CD4-positive, alpha-beta T cell (primary cell): ENCODE measurements at regions of chr6 and their contacts with region 1.

Region 1: DNA sequence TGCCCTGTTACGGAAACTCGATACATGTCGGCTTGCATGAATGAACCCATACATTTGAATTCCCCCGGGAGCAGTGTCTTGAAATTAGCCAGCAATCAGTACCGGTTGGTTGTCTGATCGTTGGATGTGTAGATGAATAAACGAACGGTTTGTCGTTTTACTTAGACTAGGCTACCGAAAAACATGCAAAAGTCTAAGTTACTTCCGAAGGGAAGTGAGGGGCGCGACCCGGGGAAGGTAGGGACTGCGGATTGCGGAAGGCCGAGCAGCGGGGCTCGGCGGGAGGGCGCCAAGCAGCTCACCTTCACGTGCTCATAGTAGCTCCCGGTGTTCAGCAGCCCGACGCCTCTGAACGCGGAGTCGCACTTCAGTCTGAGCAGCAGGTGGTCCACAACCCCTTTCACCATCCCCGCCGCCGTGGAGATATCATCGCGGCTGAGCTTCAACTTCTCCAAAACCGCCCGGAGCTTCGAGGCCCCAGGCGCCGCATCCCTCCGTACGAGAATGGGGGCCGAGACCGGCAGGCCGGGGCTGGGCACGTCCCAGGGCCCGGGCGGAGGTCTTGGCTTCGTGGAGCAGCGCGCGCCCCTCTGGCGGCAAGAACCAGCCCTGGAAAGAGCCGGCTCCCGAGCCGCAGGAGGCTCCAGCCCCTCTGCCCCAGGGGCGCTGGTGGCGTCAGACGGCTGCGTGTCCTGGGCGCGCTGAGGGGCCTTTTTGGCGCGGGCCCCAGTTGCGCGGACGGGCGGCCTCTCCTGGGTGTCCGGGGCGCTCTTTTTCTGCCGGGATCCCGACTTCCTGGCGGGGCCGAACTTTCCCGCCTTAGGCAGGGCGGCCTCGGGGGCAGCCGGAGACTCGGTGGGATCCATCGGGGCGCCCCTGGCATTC is 632 bp downstream of the CGAS start:
- DNase-seq: peak; percentile 9 to 74 (median 31)
- ATAC-seq: peak; percentile 53
- H3K4me3 ChIP-seq: peak overlapping the region; percentile 87
- H3K4me3 Mint-ChIP-seq: peak overlapping the region; percentile 92
- H3K27ac ChIP-seq: peak overlapping the region; percentile 69 to 85
- H3K27ac Mint-ChIP-seq: peak overlapping the region; percentile 86
- H3K4me1 ChIP-seq: peaks cover 54% of the 10 kb centered on the region
- H3K4me1 Mint-ChIP-seq: peaks cover 32% of the 10 kb centered on the region
- H3K27me3 ChIP-seq: no peaks in the 10 kb centered on the region
- H3K27me3 Mint-ChIP-seq: no peaks in the 10 kb centered on the region
- CTCF ChIP-seq: no peak

Region 2: GRCh38 chr6:73394577-73395354 is 56.7 kb before region 1 on chr6 and contains the start of gene DDX43:
- CTCF ChIA-PET with region 1: no interaction called
- POLR2A ChIA-PET with region 1: interaction called, 12 read pairs
- intact Hi-C with region 1: no loop called
- DNase-seq: peak in 10 of 14 experiments; percentile 18 to 78 (median 49)
- ATAC-seq: peak; percentile 88
- H3K4me3 ChIP-seq: peak within 1 kb of the TSS; percentile 42
- H3K4me3 Mint-ChIP-seq: peak within 1 kb of the TSS; percentile 92
- H3K27ac ChIP-seq: peak within 1 kb of the TSS in 1 of 2 donors; percentile 64
- H3K27ac Mint-ChIP-seq: peak within 1 kb of the TSS; percentile 96
- H3K4me1 ChIP-seq: peaks cover 14% of the 10 kb centered on the region
- H3K4me1 Mint-ChIP-seq: peaks cover 21% of the 10 kb centered on the region
- H3K27me3 ChIP-seq: no peaks in the 10 kb centered on the region
- H3K27me3 Mint-ChIP-seq: no peaks in the 10 kb centered on the region
- CTCF ChIP-seq: no peak
- total RNA-seq, gene DDX43: 2.2 to 2.5 TPM

Region 3: DNA sequence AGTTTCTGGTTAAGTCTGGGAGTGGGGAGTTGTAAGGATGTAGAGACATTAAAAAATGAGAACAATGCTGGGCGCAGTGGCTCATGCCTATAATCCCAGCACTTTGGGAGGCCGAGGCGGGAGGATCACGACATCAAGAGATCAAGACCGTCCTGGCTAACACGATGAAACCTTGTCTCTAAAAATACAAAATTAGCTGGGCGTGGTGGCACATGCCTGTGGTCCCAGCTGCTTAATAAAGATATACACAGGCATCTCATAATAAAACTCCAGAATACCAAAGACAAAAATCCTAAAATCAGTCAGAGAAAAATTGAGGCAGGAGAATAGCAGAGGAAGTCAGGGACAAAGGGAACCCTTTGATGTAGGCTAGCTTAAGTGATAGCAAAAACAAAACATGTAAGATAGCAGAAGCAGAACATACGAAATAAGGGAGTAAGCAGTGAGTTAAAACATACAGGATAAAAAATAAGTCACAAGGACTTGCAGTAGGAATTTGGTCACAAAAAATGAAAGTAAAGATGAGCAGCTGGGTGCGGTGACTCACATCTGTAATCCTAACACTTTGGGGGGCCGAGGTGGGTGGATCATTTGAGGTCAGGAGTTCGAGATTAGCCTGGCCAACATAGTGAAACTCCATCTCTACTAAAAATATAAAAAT is 33.3 kb before region 1 on chr6:
- CTCF ChIA-PET with region 1: no interaction called
- POLR2A ChIA-PET with region 1: interaction called, 6 read pairs
- intact Hi-C with region 1: loop called in 1 of 2 experiments (anchors 2 kb)
- DNase-seq: peak in 1 of 14 experiments; percentile 18
- ATAC-seq: no peak
- H3K4me3 ChIP-seq: no peak overlapping the region
- H3K4me3 Mint-ChIP-seq: no peak overlapping the region
- H3K27ac ChIP-seq: no peak overlapping the region
- H3K27ac Mint-ChIP-seq: peak overlapping the region; percentile 29
- H3K4me1 ChIP-seq: peaks cover 19% of the 10 kb centered on the region
- H3K4me1 Mint-ChIP-seq: peaks cover 20% of the 10 kb centered on the region
- H3K27me3 ChIP-seq: no peaks in the 10 kb centered on the region
- H3K27me3 Mint-ChIP-seq: no peaks in the 10 kb centered on the region
- CTCF ChIP-seq: no peak

Region 4: GRCh38 chr6:73435236-73435635 is 16.2 kb before region 1 on chr6:
- CTCF ChIA-PET with region 1: no interaction called
- POLR2A ChIA-PET with region 1: no interaction called
- intact Hi-C with region 1: no loop called
- DNase-seq: no peak
- ATAC-seq: no peak
- H3K4me3 ChIP-seq: no peak overlapping the region
- H3K4me3 Mint-ChIP-seq: no peak overlapping the region
- H3K27ac ChIP-seq: no peak overlapping the region
- H3K27ac Mint-ChIP-seq: no peak overlapping the region
- H3K4me1 ChIP-seq: peaks cover 7% of the 10 kb centered on the region
- H3K4me1 Mint-ChIP-seq: peaks cover 4% of the 10 kb centered on the region
- H3K27me3 ChIP-seq: no peaks in the 10 kb centered on the region
- H3K27me3 Mint-ChIP-seq: no peaks in the 10 kb centered on the region
- CTCF ChIP-seq: no peak